Naive thymus-derived CD4-positive, alpha-beta T cell (primary cell): ENCODE measurements at regions of chr3 and their contacts with region 1.

Region 1: GRCh38 chr3:130759699-130760338 is 13.2 kb upstream of the PIK3R4 start:
- DNase-seq: peak in 8 of 9 donors; percentile 27 to 65 (median 50)
- ATAC-seq: peak; percentile 89
- H3K4me3 ChIP-seq: no peak overlapping the region
- H3K4me3 Mint-ChIP-seq: no peak overlapping the region
- H3K27ac ChIP-seq: no peak overlapping the region
- H3K27ac Mint-ChIP-seq: peak overlapping the region in 1 of 9 donors; percentile 68
- H3K4me1 ChIP-seq: no peaks in the 10 kb centered on the region
- H3K4me1 Mint-ChIP-seq: peaks cover 0 to 10% (median 0%) of the 10 kb centered on the region in 7 donors
- H3K27me3 ChIP-seq: no peaks in the 10 kb centered on the region
- H3K27me3 Mint-ChIP-seq: peaks cover 0 to 20% (median 6%) of the 10 kb centered on the region in 5 donors

Region 2: DNA sequence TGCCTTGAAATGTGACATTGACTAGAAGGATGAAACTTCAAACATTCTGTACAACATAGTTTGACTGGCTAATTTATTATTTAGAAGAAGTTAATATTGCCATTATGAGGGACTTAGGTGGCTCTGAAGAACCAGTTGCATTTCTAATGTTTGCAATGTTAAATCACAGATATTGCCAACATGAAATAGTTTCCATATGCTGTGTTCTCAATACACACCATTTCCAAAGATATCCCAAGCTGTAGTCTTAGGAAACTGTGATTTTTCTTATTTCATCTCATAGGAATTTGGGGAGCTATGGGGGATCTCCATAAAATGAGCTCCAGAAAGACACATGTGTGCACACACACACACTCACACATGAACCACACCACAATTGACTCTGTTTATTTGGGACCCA is 641.9 kb before region 1 on chr3:
- CTCF ChIA-PET with region 1: no interaction called
- POLR2A ChIA-PET with region 1: no interaction called
- intact Hi-C with region 1: no loop called
- DNase-seq: no peak
- ATAC-seq: no peak
- H3K4me3 ChIP-seq: no peak overlapping the region
- H3K4me3 Mint-ChIP-seq: no peak overlapping the region
- H3K27ac ChIP-seq: no peak overlapping the region
- H3K27ac Mint-ChIP-seq: no peak overlapping the region
- H3K4me1 ChIP-seq: no peaks in the 10 kb centered on the region
- H3K4me1 Mint-ChIP-seq: peaks cover 0 to 2% (median under 1%) of the 10 kb centered on the region in 7 donors
- H3K27me3 ChIP-seq: no peaks in the 10 kb centered on the region
- H3K27me3 Mint-ChIP-seq: peaks cover 0 to 17% (median 0%) of the 10 kb centered on the region in 5 donors

Region 3: DNA sequence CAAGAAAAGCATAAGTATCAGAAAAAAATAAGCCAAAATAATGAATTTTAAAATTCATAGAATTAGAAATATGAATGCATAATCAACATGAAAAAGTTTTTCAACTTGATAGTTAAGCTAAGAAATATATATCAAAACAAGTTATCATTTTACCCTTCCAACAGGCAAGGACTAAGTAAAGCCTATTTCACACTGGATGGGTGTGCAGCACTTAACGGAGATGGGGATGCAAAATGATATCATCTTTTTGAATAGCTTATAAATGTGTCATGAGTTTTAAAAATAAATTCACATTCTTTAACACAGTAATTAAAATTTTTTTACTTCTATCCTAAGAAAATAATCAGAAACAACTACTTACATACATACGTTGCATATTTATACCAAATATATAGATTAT is 34.1 kb before region 1 on chr3:
- CTCF ChIA-PET with region 1: no interaction called
- POLR2A ChIA-PET with region 1: no interaction called
- intact Hi-C with region 1: loop called in 1 of 2 experiments (anchors 1 kb)
- DNase-seq: no peak
- ATAC-seq: no peak
- H3K4me3 ChIP-seq: no peak overlapping the region
- H3K4me3 Mint-ChIP-seq: no peak overlapping the region
- H3K27ac ChIP-seq: no peak overlapping the region
- H3K27ac Mint-ChIP-seq: no peak overlapping the region
- H3K4me1 ChIP-seq: no peaks in the 10 kb centered on the region
- H3K4me1 Mint-ChIP-seq: peaks cover 0 to 13% (median 7%) of the 10 kb centered on the region in 7 donors
- H3K27me3 ChIP-seq: no peaks in the 10 kb centered on the region
- H3K27me3 Mint-ChIP-seq: no peaks in the 10 kb centered on the region

Region 4: DNA sequence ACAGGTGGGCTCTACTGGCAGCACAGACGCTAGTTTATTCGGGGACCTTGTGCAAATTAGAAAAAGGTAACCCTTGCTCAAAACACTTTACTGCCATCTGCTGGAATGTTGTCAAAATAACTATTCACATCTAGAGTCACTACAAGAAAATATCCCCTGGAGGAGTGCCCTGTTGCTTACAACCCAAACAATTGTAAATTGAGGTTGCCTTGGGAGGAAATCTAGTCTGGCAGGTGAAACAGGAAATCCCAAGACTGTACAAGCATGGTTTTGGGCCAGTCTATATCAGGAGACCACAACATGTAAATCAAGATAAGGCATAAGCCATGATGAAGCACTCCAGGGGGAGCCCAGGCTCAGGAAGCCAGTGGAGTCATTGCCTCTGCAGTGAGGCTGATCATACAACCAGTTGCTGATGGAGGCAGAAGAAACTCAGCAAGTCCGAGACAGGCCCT is 1420.5 kb after region 1 on chr3:
- CTCF ChIA-PET with region 1: no interaction called
- POLR2A ChIA-PET with region 1: no interaction called
- intact Hi-C with region 1: loop called in 1 of 2 experiments (anchors 2 kb)
- DNase-seq: peak in 6 of 9 donors; percentile 8 to 33 (median 18)
- ATAC-seq: peak; percentile 58
- H3K4me3 ChIP-seq: no peak overlapping the region
- H3K4me3 Mint-ChIP-seq: peak overlapping the region in 2 of 10 donors; percentile 3 to 27
- H3K27ac ChIP-seq: no peak overlapping the region
- H3K27ac Mint-ChIP-seq: no peak overlapping the region
- H3K4me1 ChIP-seq: no peaks in the 10 kb centered on the region
- H3K4me1 Mint-ChIP-seq: peaks cover 0 to 6% (median 4%) of the 10 kb centered on the region in 7 donors
- H3K27me3 ChIP-seq: no peaks in the 10 kb centered on the region
- H3K27me3 Mint-ChIP-seq: peaks cover 2 to 20% (median 7%) of the 10 kb centered on the region in 5 donors